ENCODE measurements at regions of chr10 and their contacts with region 1.

Region 1: GRCh38 chr10:88986549-88987242 is 3.9 kb upstream of the FAS start:
- DNase-seq: no peak
- H3K4me3 ChIP-seq: no peak overlapping the region
- H3K27ac ChIP-seq: peak overlapping the region in 7 of 8 donors; percentile 30 to 99 (median 96)
- H3K4me1 ChIP-seq: peaks cover 22 to 78% (median 35%) of the 10 kb centered on the region in 6 donors
- H3K27me3 ChIP-seq: no peaks in the 10 kb centered on the region
- CTCF ChIP-seq: peak in 9 of 11 experiments; percentile 46 to 73 (median 57)
- POLR2A ChIP-seq: no peak

Region 2: DNA sequence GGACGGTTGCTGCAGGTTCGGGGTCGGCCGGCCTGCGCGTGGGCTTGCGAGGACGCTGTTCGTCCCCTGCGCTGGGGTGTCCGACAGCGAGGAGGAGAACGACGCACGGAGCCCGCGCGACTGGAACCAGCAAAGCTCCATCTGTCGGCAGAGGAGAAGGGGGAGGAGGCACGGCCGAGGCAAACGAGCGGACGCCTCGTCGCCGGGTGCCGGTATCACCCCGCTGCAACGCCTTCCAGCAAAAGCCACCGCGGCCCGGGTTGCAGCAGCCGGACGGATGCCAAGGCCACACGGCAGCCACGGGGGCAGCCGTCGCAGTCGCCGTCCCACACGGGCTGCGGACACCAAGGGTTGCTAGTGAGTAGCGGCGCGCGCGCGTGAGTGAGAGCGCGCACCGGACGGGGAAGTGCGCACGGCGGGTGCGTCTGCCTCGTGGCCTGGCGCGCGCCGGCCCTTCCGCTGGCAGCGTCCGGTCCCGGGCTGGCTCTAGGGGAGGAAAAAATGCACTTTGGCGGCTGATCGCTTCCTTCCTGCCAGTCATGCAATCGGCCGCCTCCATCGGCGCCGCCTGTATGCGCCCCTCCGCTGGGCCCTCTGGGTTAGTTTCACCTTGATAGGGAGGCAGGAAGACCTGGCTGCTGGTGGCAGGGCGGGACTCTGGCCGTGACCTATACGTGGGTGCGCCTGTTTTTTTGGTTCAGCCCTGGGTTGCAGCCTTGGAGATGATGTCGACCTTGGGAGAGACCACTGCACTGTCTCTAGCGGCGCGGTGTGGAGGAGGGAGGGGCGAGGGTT is 106.2 kb before region 1 on chr10:
- intact Hi-C with region 1: loop called (anchors 10 kb)
- DNase-seq: peak; percentile 97
- H3K4me3 ChIP-seq: peak overlapping the region; percentile 52 to 90 (median 81)
- H3K27ac ChIP-seq: peak overlapping the region; percentile 93 to 98 (median 96)
- H3K4me1 ChIP-seq: peaks cover 22 to 70% (median 63%) of the 10 kb centered on the region in 6 donors
- H3K27me3 ChIP-seq: no peaks in the 10 kb centered on the region
- CTCF ChIP-seq: peak in 6 of 11 experiments; percentile 4 to 46 (median 13)
- POLR2A ChIP-seq: peak; percentile 25 to 70 (median 65)

Measured in spleen (tissue), 13 donors.